ENCODE measurements at regions of chr2 and their contacts with region 1.

Region 1: GRCh38 chr2:224875841-224876240 is 159.7 kb upstream of the CCDC195 start:
- DNase-seq: peak; percentile 17
- ATAC-seq: peak; percentile 28
- H3K4me3 ChIP-seq: no peak overlapping the region
- H3K4me3 Mint-ChIP-seq: peak overlapping the region; percentile 65
- H3K27ac ChIP-seq: peak overlapping the region; percentile 39 to 61
- H3K27ac Mint-ChIP-seq: peak overlapping the region; percentile 77
- H3K4me1 ChIP-seq: peaks cover 28 to 29% of the 10 kb centered on the region in 2 donors
- H3K4me1 Mint-ChIP-seq: peaks cover 29% of the 10 kb centered on the region
- H3K27me3 ChIP-seq: no peaks in the 10 kb centered on the region
- H3K27me3 Mint-ChIP-seq: no peaks in the 10 kb centered on the region
- CTCF ChIP-seq: no peak

Region 2: GRCh38 chr2:224807153-224807964 is 68.5 kb before region 1 on chr2:
- CTCF ChIA-PET with region 1: no interaction called
- POLR2A ChIA-PET with region 1: no interaction called
- intact Hi-C with region 1: loop called (anchors 5 kb)
- DNase-seq: no peak
- ATAC-seq: no peak
- H3K4me3 ChIP-seq: no peak overlapping the region
- H3K4me3 Mint-ChIP-seq: no peak overlapping the region
- H3K27ac ChIP-seq: no peak overlapping the region
- H3K27ac Mint-ChIP-seq: no peak overlapping the region
- H3K4me1 ChIP-seq: no peaks in the 10 kb centered on the region
- H3K4me1 Mint-ChIP-seq: no peaks in the 10 kb centered on the region
- H3K27me3 ChIP-seq: no peaks in the 10 kb centered on the region
- H3K27me3 Mint-ChIP-seq: no peaks in the 10 kb centered on the region
- CTCF ChIP-seq: no peak

Region 3: GRCh38 chr2:224885836-224886547 is 10.2 kb after region 1 on chr2:
- CTCF ChIA-PET with region 1: no interaction called
- POLR2A ChIA-PET with region 1: no interaction called
- intact Hi-C with region 1: loop called (anchors 1 kb)
- DNase-seq: no peak
- ATAC-seq: no peak
- H3K4me3 ChIP-seq: no peak overlapping the region
- H3K4me3 Mint-ChIP-seq: peak overlapping the region; percentile 48
- H3K27ac ChIP-seq: peak overlapping the region in 1 of 2 donors; percentile 18
- H3K27ac Mint-ChIP-seq: peak overlapping the region; percentile 91
- H3K4me1 ChIP-seq: no peaks in the 10 kb centered on the region
- H3K4me1 Mint-ChIP-seq: peaks cover 27% of the 10 kb centered on the region
- H3K27me3 ChIP-seq: no peaks in the 10 kb centered on the region
- H3K27me3 Mint-ChIP-seq: no peaks in the 10 kb centered on the region
- CTCF ChIP-seq: no peak

Measured in B cell (primary cell).